GM12878 (cell line): ENCODE measurements at regions of chr9 and their contacts with region 1.

Region 1: DNA sequence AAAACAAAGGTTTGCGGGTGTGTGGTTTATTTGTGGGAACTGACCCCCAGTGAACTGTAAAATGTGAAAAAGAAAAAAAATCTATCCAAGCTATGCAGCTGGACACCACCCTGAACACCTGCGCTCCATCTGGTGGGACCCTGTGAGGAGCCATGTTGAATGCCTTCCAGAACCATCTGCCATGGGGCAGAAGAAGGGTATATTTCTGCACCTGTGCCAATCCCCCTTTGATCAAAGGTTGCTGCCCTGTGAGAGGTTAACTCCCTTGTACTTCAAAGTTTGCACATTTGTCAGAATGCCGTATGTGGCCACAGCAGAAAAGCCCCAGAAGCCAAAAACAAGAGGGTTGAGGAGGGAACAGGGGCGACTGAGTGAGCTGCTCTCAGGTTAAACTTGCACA is 148.5 kb upstream of the ALDH1B1 start:
- DNase-seq: no peak
- ATAC-seq: no peak
- H3K4me3 ChIP-seq: no peak overlapping the region
- H3K27ac ChIP-seq: no peak overlapping the region
- H3K4me1 ChIP-seq: no peaks in the 10 kb centered on the region
- H3K27me3 ChIP-seq: no peaks in the 10 kb centered on the region
- CTCF ChIP-seq: no peak
- EP300 ChIP-seq: no peak
- POLR2A ChIP-seq: no peak
- RAD21 ChIP-seq: no peak

Region 2: DNA sequence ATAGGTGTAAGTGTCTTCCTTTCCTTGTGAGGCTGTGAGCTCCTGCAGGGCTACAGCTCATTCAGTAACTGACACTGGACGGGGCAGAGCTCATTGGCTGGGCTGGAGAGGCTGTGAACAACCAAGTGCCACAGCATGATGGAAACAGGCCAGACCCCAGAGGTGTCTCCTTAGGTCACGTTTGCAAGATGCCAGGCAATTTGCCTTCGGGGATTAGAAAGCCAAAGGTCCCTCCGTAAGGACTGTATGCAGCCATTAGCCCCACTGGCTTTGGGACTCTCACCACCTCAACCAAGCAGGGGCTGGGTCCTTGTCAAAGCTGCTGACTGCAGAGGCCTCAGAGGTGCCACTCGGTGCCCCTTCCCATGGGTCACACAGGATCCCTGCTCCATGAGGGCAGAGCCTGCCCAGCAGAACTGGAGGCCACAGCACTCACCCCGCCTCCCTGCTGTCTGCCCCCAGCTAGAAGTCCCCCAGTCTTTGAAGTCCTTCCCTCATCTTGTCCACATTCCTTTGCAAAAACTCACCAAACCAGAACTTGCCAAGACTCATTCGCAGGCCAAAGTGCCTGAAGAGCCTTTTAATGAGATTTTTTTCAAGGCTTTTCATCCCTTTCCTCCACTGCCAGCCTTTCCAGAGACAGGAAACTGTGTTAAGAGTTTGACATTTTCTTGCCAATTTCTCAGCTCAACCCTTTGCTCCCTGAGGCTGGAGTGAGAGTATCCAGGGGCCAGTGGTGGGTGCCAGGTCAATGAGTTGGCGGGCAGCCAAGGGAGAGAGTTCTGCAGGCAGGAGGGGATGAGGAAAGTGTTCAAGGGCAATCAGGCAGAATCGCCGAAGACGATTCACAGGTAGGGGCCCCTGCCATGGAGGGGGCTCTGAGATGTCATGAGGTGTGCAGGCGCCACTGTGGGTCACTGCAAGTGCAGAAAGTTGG is 300.4 kb before region 1 on chr9:
- CTCF ChIA-PET with region 1: no interaction called
- POLR2A ChIA-PET with region 1: no interaction called
- RAD21 ChIA-PET with region 1: no interaction called
- SMC1A ChIA-PET with region 1: no interaction called
- in situ Hi-C with region 1: no loop called
- intact Hi-C with region 1: no loop called
- DNase-seq: no peak
- ATAC-seq: no peak
- H3K4me3 ChIP-seq: no peak overlapping the region
- H3K27ac ChIP-seq: no peak overlapping the region
- H3K4me1 ChIP-seq: no peaks in the 10 kb centered on the region
- H3K27me3 ChIP-seq: no peaks in the 10 kb centered on the region; a peak in 1 of 4 replicates
- CTCF ChIP-seq: no peak
- EP300 ChIP-seq: no peak
- POLR2A ChIP-seq: no peak
- RAD21 ChIP-seq: no peak

Region 3: GRCh38 chr9:38233343-38233742 is 10.7 kb before region 1 on chr9:
- CTCF ChIA-PET with region 1: interaction called, 4 read pairs
- POLR2A ChIA-PET with region 1: interaction called, 5 read pairs
- RAD21 ChIA-PET with region 1: interaction called, 3 read pairs
- SMC1A ChIA-PET with region 1: interaction called, 16 read pairs
- in situ Hi-C with region 1: no loop called
- intact Hi-C with region 1: no loop called
- DNase-seq: no peak
- ATAC-seq: no peak
- H3K4me3 ChIP-seq: no peak overlapping the region
- H3K27ac ChIP-seq: no peak overlapping the region
- H3K4me1 ChIP-seq: no peaks in the 10 kb centered on the region
- H3K27me3 ChIP-seq: peaks cover 0 to 3% of the 10 kb centered on the region in 2 experiments; a peak in 3 of 4 replicates
- CTCF ChIP-seq: no peak
- EP300 ChIP-seq: no peak
- POLR2A ChIP-seq: no peak
- RAD21 ChIP-seq: no peak